H1 (cell line): ENCODE measurements at regions of chr15 and their contacts with region 1.

Region 1: GRCh38 chr15:74307827-74308644 is 59.4 kb downstream of the CYP11A1 start:
- DNase-seq: peak in 1 of 2 experiments; percentile 74
- H3K4me3 ChIP-seq: peak overlapping the region in 1 of 4 experiments; percentile 37; a peak in 1 of 8 replicates
- H3K27ac ChIP-seq: no peak overlapping the region
- H3K4me1 ChIP-seq: peaks cover 0 to 36% (median 22%) of the 10 kb centered on the region in 4 experiments; a peak in 6 of 7 replicates
- H3K27me3 ChIP-seq: peaks cover 0 to 10% (median 0%) of the 10 kb centered on the region in 4 experiments; a peak in 4 of 7 replicates
- CTCF ChIP-seq: peak; percentile 74 to 87 (median 85)
- EP300 ChIP-seq: no peak
- POLR2A ChIP-seq: no peak
- RAD21 ChIP-seq: peak; percentile 87 to 89

Region 2: GRCh38 chr15:74108111-74108510 is 199.9 kb before region 1 on chr15:
- CTCF ChIA-PET with region 1: interaction called, 12 read pairs
- POLR2A ChIA-PET with region 1: no interaction called
- DNase-seq: no peak
- H3K4me3 ChIP-seq: no peak overlapping the region
- H3K27ac ChIP-seq: no peak overlapping the region
- H3K4me1 ChIP-seq: no peaks in the 10 kb centered on the region
- H3K27me3 ChIP-seq: no peaks in the 10 kb centered on the region
- CTCF ChIP-seq: no peak
- EP300 ChIP-seq: no peak
- POLR2A ChIP-seq: no peak
- RAD21 ChIP-seq: no peak

Region 3: GRCh38 chr15:74134387-74135027 is 173.5 kb before region 1 on chr15:
- CTCF ChIA-PET with region 1: interaction called, 65 read pairs
- POLR2A ChIA-PET with region 1: interaction called, 3 read pairs
- DNase-seq: peak in 1 of 2 experiments; percentile 89
- H3K4me3 ChIP-seq: peak overlapping the region in 3 of 4 experiments; percentile 20 to 62 (median 36); a peak in 6 of 8 replicates
- H3K27ac ChIP-seq: no peak overlapping the region
- H3K4me1 ChIP-seq: peaks cover 0 to 69% (median 57%) of the 10 kb centered on the region in 4 experiments; a peak in 6 of 7 replicates
- H3K27me3 ChIP-seq: peaks cover 72 to 96% (median 91%) of the 10 kb centered on the region in 4 experiments
- CTCF ChIP-seq: peak in 2 of 3 experiments; percentile 65 to 71; a peak in 3 of 4 replicates
- EP300 ChIP-seq: no peak
- POLR2A ChIP-seq: no peak
- RAD21 ChIP-seq: peak; percentile 48 to 58

Region 4: DNA sequence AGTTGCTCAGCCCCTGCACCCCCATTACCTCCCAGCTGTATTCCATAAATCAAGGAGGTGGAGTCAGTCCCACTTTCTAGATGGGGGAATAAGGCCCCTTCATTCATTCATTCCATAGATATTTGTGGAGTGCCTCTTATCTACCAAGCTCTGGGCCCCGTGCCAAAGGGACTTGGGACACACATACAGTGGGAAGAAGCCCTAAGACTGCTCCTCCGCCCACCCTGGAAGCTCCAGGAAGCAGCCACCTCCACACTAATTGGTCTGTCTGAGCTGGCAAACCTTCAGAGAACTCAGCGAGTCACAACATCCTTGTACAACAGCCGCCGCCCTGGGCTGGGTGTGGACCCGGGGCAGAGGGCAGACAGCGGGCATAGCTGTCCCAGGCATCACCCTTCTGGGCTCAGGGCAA is 111.9 kb before region 1 on chr15:
- CTCF ChIA-PET with region 1: interaction called, 38 read pairs
- POLR2A ChIA-PET with region 1: no interaction called
- DNase-seq: no peak
- H3K4me3 ChIP-seq: no peak overlapping the region
- H3K27ac ChIP-seq: no peak overlapping the region
- H3K4me1 ChIP-seq: peaks cover 0 to 12% (median 6%) of the 10 kb centered on the region in 4 experiments; a peak in 6 of 7 replicates
- H3K27me3 ChIP-seq: no peaks in the 10 kb centered on the region
- CTCF ChIP-seq: no peak
- EP300 ChIP-seq: no peak
- POLR2A ChIP-seq: no peak
- RAD21 ChIP-seq: no peak

Region 5: DNA sequence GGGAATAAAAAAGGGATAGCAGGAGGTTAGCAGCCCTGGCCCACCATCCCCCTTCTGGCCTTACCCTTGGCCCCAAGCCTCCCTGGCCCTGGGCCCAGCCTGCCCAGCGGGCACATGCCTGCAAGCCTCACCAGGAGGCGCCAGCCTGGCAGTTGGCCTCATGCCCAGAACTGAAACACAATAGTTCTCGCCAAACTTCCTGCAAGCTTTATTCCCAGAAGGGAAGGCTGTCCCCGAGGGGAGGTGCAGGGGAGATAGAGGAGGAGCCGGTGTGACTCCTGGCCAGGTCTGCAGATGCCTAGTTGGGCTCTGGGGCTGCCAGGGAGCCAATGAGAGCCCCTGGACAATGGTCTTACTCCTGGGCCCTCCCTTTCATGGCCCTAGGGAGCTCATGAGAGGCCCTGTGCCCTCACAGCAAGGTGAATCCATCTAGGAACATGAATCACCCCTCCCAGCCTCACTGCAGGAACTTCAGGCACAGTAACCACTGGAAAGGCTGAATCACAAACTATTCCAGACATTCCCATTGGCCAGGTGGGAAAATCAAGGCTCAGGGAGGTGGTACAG is 68.0 kb before region 1 on chr15:
- CTCF ChIA-PET with region 1: interaction called, 15 read pairs
- POLR2A ChIA-PET with region 1: no interaction called
- DNase-seq: no peak
- H3K4me3 ChIP-seq: no peak overlapping the region
- H3K27ac ChIP-seq: no peak overlapping the region
- H3K4me1 ChIP-seq: peaks cover 0 to 26% (median 16%) of the 10 kb centered on the region in 4 experiments; a peak in 6 of 7 replicates
- H3K27me3 ChIP-seq: peaks cover 0 to 9% (median 2%) of the 10 kb centered on the region in 4 experiments; a peak in 4 of 7 replicates
- CTCF ChIP-seq: peak; percentile 28 to 47 (median 40)
- EP300 ChIP-seq: no peak
- POLR2A ChIP-seq: no peak
- RAD21 ChIP-seq: peak; percentile 31 to 51; a peak in 3 of 4 replicates

Region 6: DNA sequence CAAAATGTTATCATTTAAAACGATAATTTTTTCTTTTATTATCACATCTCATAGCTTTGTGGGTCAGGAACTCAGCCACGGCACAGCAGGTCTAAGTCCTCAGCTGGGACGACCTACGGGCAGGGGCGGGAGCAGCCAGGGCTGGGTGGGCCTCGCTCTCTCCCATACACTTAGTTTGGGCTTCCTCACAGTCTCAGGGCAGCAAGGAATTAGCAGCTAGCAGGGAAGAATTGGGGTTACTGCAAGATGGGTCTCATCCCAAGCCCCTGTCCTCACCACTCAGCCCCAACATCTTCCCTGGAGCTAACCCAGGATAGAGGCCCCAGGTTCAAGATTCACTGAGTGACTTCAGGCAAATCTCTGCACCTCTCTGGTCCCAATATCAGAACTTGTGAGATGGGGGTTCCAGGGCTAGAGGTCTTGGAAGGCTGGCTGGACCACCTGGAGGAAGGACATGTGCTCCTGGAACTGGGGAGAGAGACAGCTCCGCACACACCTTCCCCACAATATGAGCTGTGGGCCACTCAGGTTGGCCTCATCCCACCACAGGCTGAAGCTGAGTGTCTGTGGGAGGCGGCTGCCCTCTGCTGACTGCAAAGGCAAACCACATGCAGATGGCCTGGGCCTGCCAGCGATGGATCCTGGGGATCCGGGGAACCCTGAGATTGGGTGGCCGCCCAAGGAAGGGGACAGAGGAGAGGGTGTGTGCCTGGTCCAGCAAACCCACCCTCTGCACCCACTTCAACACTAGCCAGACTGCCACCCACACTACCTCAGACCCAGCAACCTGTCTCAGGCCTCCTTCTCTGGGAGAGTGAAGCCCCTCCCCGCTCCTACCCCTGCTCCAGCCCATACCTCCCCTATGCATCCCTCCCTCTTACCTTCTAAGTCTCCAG is 14.4 kb after region 1 on chr15:
- CTCF ChIA-PET with region 1: interaction called, 353 read pairs
- POLR2A ChIA-PET with region 1: interaction called, 19 read pairs
- DNase-seq: peak in 1 of 2 experiments; percentile 88
- H3K4me3 ChIP-seq: no peak overlapping the region
- H3K27ac ChIP-seq: no peak overlapping the region
- H3K4me1 ChIP-seq: peaks cover 3 to 25% (median 19%) of the 10 kb centered on the region in 4 experiments
- H3K27me3 ChIP-seq: no peaks in the 10 kb centered on the region
- CTCF ChIP-seq: peak; percentile 96 to 99 (median 97)
- EP300 ChIP-seq: no peak
- POLR2A ChIP-seq: no peak
- RAD21 ChIP-seq: peak; percentile 99